B cell (primary cell): ENCODE measurements at regions of chr10 and their contacts with region 1.

Region 1: GRCh38 chr10:124035928-124036558 is 57.4 kb downstream of the CHST15 start:
- DNase-seq: peak; percentile 90
- ATAC-seq: peak; percentile 91
- H3K4me3 ChIP-seq: peak overlapping the region in 4 of 5 experiments; percentile 30 to 47 (median 36)
- H3K4me3 Mint-ChIP-seq: peak overlapping the region; percentile 85
- H3K27ac ChIP-seq: peak overlapping the region; percentile 79 to 85
- H3K27ac Mint-ChIP-seq: peak overlapping the region; percentile 98
- H3K4me1 ChIP-seq: peaks cover 19 to 41% of the 10 kb centered on the region in 2 donors
- H3K4me1 Mint-ChIP-seq: peaks cover 26% of the 10 kb centered on the region
- H3K27me3 ChIP-seq: no peaks in the 10 kb centered on the region
- H3K27me3 Mint-ChIP-seq: no peaks in the 10 kb centered on the region
- CTCF ChIP-seq: no peak

Region 2: GRCh38 chr10:124057601-124058000 is 21.6 kb after region 1 on chr10:
- CTCF ChIA-PET with region 1: no interaction called
- POLR2A ChIA-PET with region 1: no interaction called
- intact Hi-C with region 1: no loop called
- DNase-seq: no peak
- ATAC-seq: no peak
- H3K4me3 ChIP-seq: no peak overlapping the region
- H3K4me3 Mint-ChIP-seq: no peak overlapping the region
- H3K27ac ChIP-seq: no peak overlapping the region
- H3K27ac Mint-ChIP-seq: no peak overlapping the region
- H3K4me1 ChIP-seq: no peaks in the 10 kb centered on the region
- H3K4me1 Mint-ChIP-seq: peaks cover 17% of the 10 kb centered on the region
- H3K27me3 ChIP-seq: no peaks in the 10 kb centered on the region
- H3K27me3 Mint-ChIP-seq: no peaks in the 10 kb centered on the region
- CTCF ChIP-seq: no peak

Region 3: GRCh38 chr10:124074501-124075109 is 38.6 kb after region 1 on chr10:
- CTCF ChIA-PET with region 1: interaction called, 3 read pairs
- POLR2A ChIA-PET with region 1: interaction called, 7 read pairs
- intact Hi-C with region 1: loop called (anchors 5 kb)
- DNase-seq: peak; percentile 59
- ATAC-seq: peak; percentile 60
- H3K4me3 ChIP-seq: peak overlapping the region in 2 of 5 experiments; percentile 8 to 41
- H3K4me3 Mint-ChIP-seq: peak overlapping the region; percentile 66
- H3K27ac ChIP-seq: peak overlapping the region; percentile 3 to 45
- H3K27ac Mint-ChIP-seq: peak overlapping the region; percentile 78
- H3K4me1 ChIP-seq: peaks cover 75 to 87% of the 10 kb centered on the region in 2 donors
- H3K4me1 Mint-ChIP-seq: peaks cover 82% of the 10 kb centered on the region
- H3K27me3 ChIP-seq: no peaks in the 10 kb centered on the region
- H3K27me3 Mint-ChIP-seq: no peaks in the 10 kb centered on the region
- CTCF ChIP-seq: no peak

Region 4: DNA sequence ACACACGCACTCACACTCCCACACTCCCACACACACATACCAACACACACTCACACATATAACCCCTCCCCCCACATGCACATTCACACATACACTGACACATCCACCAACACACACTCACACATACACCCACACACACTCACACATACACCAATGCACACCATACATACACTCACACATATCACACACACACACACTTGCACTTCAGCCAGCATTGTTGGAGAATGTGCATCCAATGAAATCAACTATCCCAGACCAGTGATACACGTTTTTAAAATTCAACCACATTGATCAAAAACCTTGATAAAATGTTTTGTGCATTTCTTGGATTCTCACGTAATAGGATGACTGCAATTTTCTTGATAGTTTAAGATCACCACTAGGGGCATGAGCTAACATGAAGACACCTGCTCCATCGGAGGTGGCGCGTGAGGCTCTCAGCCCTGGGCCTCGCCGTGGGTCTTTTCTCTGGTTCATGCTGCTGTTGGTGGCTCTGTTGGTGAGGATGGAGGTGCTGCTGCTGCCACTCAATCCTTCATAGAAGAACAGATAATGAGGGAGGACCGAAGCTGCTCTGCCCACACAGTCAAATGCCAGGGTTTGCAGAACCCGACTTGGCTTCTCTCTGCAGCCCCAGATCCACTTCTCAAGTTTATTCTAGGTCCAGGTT is 89.5 kb after region 1 on chr10:
- CTCF ChIA-PET with region 1: interaction called, 9 read pairs
- POLR2A ChIA-PET with region 1: interaction called, 9 read pairs
- intact Hi-C with region 1: loop called (anchors 1 kb)
- DNase-seq: peak; percentile 62
- ATAC-seq: no peak
- H3K4me3 ChIP-seq: no peak overlapping the region
- H3K4me3 Mint-ChIP-seq: no peak overlapping the region
- H3K27ac ChIP-seq: no peak overlapping the region
- H3K27ac Mint-ChIP-seq: no peak overlapping the region
- H3K4me1 ChIP-seq: peaks cover 32 to 61% of the 10 kb centered on the region in 2 donors
- H3K4me1 Mint-ChIP-seq: peaks cover 7% of the 10 kb centered on the region
- H3K27me3 ChIP-seq: no peaks in the 10 kb centered on the region
- H3K27me3 Mint-ChIP-seq: no peaks in the 10 kb centered on the region
- CTCF ChIP-seq: peak; percentile 70

Region 5: GRCh38 chr10:124221356-124222317 is 185.6 kb after region 1 on chr10:
- CTCF ChIA-PET with region 1: interaction called, 4 read pairs
- POLR2A ChIA-PET with region 1: interaction called, 3 read pairs
- intact Hi-C with region 1: loop called (anchors 2 kb)
- DNase-seq: peak; percentile 32
- ATAC-seq: peak; percentile 22
- H3K4me3 ChIP-seq: peak overlapping the region in 3 of 5 experiments; percentile 25 to 60 (median 35)
- H3K4me3 Mint-ChIP-seq: peak overlapping the region; percentile 79
- H3K27ac ChIP-seq: no peak overlapping the region
- H3K27ac Mint-ChIP-seq: peak overlapping the region; percentile 56
- H3K4me1 ChIP-seq: peaks cover 28 to 30% of the 10 kb centered on the region in 2 donors
- H3K4me1 Mint-ChIP-seq: peaks cover 33% of the 10 kb centered on the region
- H3K27me3 ChIP-seq: no peaks in the 10 kb centered on the region
- H3K27me3 Mint-ChIP-seq: no peaks in the 10 kb centered on the region
- CTCF ChIP-seq: no peak

Region 6: GRCh38 chr10:125076891-125077541 is 1041.0 kb after region 1 on chr10:
- CTCF ChIA-PET with region 1: no interaction called
- POLR2A ChIA-PET with region 1: no interaction called
- intact Hi-C with region 1: no loop called
- DNase-seq: no peak
- ATAC-seq: no peak
- H3K4me3 ChIP-seq: no peak overlapping the region
- H3K4me3 Mint-ChIP-seq: no peak overlapping the region
- H3K27ac ChIP-seq: no peak overlapping the region
- H3K27ac Mint-ChIP-seq: no peak overlapping the region
- H3K4me1 ChIP-seq: no peaks in the 10 kb centered on the region
- H3K4me1 Mint-ChIP-seq: no peaks in the 10 kb centered on the region
- H3K27me3 ChIP-seq: peaks cover 0 to 57% (median 22%) of the 10 kb centered on the region in 4 experiments
- H3K27me3 Mint-ChIP-seq: peaks cover 66% of the 10 kb centered on the region
- CTCF ChIP-seq: no peak